ENCODE measurements at regions of chr3 and their contacts with region 1.

Region 1: DNA sequence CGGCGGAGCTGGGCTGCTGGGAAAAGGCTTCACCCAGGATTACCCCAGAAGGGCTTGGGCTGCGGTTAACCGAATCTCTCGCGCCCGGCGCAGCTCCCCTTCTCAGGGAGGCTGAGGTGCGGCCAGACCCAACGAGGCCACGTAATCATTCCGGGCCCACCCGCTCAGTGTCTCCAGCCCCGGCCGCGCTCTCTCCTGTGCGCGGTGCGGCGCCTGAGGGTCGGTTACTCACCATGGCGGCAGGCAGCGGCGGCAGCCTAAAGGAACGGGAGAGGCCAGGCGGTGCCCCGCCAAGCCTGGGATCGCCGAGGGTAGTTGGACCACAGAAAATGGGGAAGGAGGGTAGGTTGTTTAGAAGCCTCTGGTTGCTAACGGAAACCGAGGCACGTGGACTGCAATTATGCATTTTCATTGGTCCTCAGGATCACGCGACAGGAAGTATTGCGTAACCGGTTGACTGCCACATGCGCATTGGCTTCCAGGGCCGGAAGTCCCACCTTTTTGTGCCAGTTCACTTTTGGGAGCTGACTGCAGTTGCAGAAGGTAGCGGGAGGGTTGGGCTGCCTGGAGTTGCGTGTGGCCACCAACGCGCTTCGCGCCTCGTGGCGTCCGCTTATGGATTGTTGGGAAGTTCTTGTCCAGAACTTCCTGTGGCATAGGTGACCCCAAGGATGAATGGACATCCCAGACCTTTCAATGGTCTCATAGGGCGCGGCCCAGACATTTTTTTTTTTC is at the start of gene LZTFL1:
- DNase-seq: peak; percentile 96
- ATAC-seq: peak; percentile 100
- total RNA-seq, gene LZTFL1: 14.0 TPM

Region 2: DNA sequence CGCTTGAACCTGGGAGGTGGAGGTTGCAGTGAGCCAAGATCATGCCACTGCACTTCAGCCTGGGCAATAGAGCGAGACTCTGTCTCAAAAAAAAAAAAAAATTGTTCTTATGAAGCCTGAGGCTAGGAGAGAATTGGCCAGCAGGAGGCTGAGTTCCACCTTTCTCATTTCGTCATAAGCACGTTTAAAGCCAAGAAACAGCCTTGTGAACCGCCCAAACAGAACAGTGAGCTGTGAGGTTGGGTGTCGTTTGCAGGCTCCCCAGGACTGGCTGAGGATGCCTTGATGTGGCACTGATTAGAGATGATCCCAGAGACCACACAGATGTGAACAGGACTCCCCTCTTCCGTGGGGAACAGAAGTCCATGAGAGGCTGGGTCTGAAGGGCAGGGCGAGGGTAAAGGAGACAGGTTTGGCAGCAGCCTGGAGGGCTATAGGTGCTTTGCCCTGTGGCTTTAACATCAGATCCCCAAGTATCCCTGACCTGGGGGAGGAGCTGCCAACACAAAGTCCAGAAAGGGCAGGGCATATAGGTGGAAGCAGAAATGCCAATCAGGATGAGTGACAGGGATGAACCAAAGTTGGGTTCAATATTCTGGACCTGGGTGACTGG is 762.9 kb before region 1 on chr3:
- intact Hi-C with region 1: no loop called
- DNase-seq: no peak
- ATAC-seq: no peak

Region 3: DNA sequence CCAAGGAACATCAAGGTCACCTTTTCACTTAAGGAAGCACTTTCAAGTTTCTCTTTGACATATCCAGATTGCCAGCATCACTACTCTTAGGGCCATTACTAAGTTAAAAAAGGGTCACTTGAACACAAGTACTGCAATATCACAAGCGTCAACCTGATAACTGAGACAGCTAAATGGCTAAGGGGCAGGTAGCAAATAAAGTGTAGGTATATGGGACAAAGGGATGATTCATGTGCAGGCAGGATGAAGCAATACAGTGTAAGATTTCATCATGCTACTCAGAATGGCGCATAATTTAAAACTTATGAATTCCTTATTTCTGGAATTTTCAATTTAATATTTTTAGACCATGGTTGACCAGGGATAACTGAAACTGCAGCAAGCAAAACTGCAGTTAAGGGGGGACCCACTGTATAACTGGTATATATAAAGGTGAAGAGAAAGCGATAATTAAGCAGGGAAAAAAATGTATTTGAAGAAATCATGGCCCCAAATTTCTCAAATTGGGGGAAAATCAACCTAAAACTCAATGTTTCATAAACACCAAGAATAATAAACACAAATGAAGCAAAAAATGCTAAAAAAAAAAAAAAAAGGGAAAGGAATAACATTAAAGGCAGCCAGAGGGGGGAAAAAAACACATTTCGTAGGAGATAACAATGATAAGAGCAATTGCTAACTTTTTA is 353.1 kb after region 1 on chr3:
- intact Hi-C with region 1: no loop called
- DNase-seq: no peak
- ATAC-seq: no peak

Region 4: GRCh38 chr3:46778101-46778500 is 936.2 kb after region 1 on chr3:
- intact Hi-C with region 1: loop called (anchors 5 kb)
- DNase-seq: no peak
- ATAC-seq: no peak

Measured in sciatic nerve (tissue), 2 donors.